SK-N-SH (cell line): ENCODE measurements at regions of chr12 and their contacts with region 1.

Region 1: GRCh38 chr12:95959107-95959506 is 16.0 kb downstream of the AMDHD1 start:
- DNase-seq: peak; percentile 53
- H3K4me3 ChIP-seq: no peak overlapping the region
- H3K27ac ChIP-seq: no peak overlapping the region
- H3K4me1 ChIP-seq: no peaks in the 10 kb centered on the region
- H3K27me3 ChIP-seq: no peaks in the 10 kb centered on the region
- CTCF ChIP-seq: peak; percentile 39
- EP300 ChIP-seq: no peak
- RAD21 ChIP-seq: peak; percentile 73

Region 2: DNA sequence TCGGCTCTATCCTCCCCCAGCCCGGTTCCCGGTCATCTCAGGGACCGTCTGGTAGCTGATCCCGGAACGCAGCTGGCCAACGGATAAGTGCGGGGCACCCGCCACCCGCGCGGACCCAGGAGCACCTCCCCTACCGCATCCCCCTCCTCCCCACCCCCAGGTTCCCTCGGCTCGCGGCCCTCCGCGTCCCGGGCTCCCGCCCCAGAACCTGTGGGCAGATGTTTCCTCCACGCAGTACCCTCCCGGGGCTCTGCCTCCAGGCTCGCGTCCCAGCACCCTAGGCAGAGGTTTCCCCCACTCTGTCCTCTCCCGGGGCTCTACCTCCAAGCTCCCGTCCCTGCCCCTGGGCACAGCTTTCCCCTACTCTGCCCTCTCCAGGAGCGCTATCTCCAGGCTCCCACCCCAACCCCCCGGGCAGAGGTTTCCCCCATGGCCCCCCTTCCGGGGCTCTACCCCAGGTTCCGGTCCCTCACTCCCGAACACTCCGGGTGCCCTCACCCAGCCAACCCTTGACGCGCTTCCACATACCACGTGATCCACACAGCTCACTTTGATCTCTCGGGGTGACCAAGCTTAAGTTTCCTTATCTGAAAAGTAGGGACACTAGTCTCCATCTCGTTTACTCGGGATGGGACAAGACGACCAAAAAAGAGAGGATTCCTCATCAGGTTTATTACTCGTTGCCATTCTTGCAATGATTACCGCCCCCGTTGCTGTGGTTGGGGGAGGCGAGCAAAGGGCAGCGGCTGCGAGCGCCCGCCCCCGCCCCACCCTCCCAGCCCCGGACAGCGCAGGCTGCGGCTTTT is 16.4 kb before region 1 on chr12 and contains the start of gene CCDC38:
- CTCF ChIA-PET with region 1: interaction called, 26 read pairs
- POLR2A ChIA-PET with region 1: interaction called, 11 read pairs
- DNase-seq: peak; percentile 98
- H3K4me3 ChIP-seq: peak within 1 kb of the TSS; percentile 69 to 76
- H3K27ac ChIP-seq: peak within 1 kb of the TSS in 1 of 2 experiments; percentile 97; a peak in 2 of 4 replicates
- H3K4me1 ChIP-seq: peaks cover 0 to 7% of the 10 kb centered on the region in 2 experiments; a peak in 2 of 4 replicates
- H3K27me3 ChIP-seq: no peaks in the 10 kb centered on the region
- CTCF ChIP-seq: no peak
- EP300 ChIP-seq: 0 out of 4 replicates have a peak, but pooled peaks of 1 of the 2 experiments have one; percentile 32
- RAD21 ChIP-seq: no peak
- polyA plus RNA-seq, gene CCDC38: not detected in 2 replicates

Region 3: DNA sequence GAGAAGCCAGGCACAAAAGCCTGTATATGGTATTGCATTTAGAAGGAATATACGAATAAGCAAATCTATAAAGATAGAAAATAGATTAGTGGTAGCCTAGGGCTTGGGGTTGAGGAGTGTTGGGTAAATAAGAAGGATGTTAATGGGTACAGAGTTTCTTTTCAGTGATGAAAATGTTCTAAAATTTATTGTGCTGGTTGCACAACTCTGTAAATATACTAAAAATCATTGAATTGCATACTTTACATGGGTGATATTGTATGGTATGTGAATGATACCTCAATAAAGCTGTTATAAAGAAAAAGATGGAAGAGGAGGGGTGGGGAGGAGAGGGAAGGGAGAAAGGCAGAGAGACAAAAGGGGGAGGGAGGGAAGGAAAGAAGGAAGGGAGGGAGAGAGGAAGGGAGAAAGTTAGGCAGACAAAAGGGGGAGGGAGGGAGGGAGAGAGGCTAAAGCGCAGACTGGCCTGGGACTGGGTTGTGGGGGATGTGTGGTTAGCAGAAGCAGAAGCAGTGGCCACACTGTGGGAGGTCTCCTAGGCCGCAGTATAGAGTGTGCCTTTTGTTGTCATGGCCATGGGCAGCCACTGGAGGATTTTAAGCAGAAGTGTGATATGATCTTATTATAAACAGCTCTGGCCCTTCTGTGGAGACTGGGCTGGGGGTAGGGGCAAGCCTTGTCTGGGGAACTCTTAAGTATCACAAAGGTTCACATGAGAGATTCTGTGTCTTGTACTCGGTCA is 161.4 kb after region 1 on chr12:
- CTCF ChIA-PET with region 1: no interaction called
- POLR2A ChIA-PET with region 1: no interaction called
- DNase-seq: peak; percentile 43
- H3K4me3 ChIP-seq: no peak overlapping the region
- H3K27ac ChIP-seq: no peak overlapping the region; a peak in 1 of 4 replicates
- H3K4me1 ChIP-seq: peaks cover 0 to 7% of the 10 kb centered on the region in 2 experiments; a peak in 1 of 4 replicates
- H3K27me3 ChIP-seq: no peaks in the 10 kb centered on the region
- CTCF ChIP-seq: no peak
- EP300 ChIP-seq: no peak
- RAD21 ChIP-seq: no peak